ENCODE measurements at regions of chr2 and their contacts with region 1.

Region 1: DNA sequence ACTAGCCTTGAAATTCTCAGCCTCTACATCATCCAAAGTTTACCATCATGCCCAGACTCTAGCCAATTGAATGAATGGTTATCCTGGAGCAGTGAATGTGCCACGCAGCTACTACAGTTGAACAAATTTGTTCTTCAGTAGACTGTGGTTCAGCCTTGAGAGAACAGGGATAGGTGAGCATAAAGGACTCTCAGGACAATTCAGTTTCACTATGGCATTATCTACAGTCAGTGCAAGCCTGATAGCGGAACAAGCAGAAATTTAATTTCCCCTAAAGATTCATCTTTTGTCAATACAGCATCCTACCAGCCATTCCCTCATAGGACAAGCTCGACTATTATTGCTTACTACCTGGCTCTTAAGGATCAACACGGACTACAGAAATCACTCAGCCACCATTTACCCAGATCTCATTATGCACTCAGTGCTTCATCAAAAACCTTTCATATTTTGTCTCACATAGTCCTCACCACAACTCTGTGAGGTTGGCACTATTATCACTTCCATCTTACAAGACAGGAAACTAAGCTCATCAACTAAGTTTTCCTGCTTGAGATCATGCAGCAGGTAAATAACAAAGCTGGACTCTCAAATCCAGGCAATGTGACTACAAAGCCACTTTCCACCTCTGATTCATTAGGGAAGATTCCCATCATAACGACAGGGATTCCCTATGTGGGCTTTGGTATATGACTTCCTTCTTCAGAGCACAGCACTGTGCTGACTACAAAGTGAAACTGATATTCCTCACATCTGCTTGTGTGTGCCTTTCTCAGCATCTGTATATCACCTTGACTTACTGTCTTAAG is 181.5 kb upstream of the ACVR2A start:
- DNase-seq: peak; percentile 17
- H3K4me3 Mint-ChIP-seq: peak overlapping the region; percentile 46
- H3K27ac Mint-ChIP-seq: peak overlapping the region; percentile 69
- H3K4me1 Mint-ChIP-seq: peaks cover 24% of the 10 kb centered on the region
- H3K27me3 Mint-ChIP-seq: no peaks in the 10 kb centered on the region

Region 2: DNA sequence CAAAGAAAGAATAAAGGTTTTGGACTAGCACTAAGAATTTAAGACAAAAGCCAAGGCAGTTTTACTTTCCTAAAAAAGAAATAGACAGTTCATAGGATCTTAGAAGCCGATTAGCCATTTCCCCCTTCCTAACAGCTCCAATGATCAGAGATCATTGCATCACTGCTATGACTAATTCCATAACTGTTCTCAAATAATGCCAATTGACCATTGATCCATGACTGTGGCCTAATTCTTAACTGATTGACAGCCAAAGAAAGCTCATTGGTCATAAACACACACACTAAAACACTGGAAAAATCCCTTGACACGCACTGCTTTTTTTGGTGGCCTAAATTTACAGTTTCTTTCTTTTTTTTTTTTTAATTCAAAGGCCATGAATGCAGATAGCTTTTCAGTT is 163.6 kb before region 1 on chr2:
- intact Hi-C with region 1: loop called (anchors 5 kb)
- DNase-seq: no peak
- H3K4me3 Mint-ChIP-seq: peak overlapping the region; percentile 63
- H3K27ac Mint-ChIP-seq: peak overlapping the region; percentile 86
- H3K4me1 Mint-ChIP-seq: peaks cover 62% of the 10 kb centered on the region
- H3K27me3 Mint-ChIP-seq: no peaks in the 10 kb centered on the region

Region 3: GRCh38 chr2:147623328-147623727 is 40.0 kb before region 1 on chr2:
- intact Hi-C with region 1: loop called (anchors 1 kb)
- DNase-seq: no peak
- H3K4me3 Mint-ChIP-seq: peak overlapping the region; percentile 13
- H3K27ac Mint-ChIP-seq: peak overlapping the region; percentile 61
- H3K4me1 Mint-ChIP-seq: peaks cover 29% of the 10 kb centered on the region
- H3K27me3 Mint-ChIP-seq: no peaks in the 10 kb centered on the region